Heart right ventricle (tissue), 16 donors: ENCODE measurements at regions of chr6 and their contacts with region 1.

Region 1: GRCh38 chr6:17431581-17431980 is 38.2 kb downstream of the CAP2 start:
- DNase-seq: no peak
- ATAC-seq: peak in 3 of 8 donors; percentile 52 to 79 (median 57)
- H3K4me3 ChIP-seq: no peak overlapping the region
- H3K27ac ChIP-seq: peak overlapping the region in 2 of 10 donors; percentile 14 to 49
- H3K4me1 ChIP-seq: peaks cover 0 to 24% (median 0%) of the 10 kb centered on the region in 9 donors
- H3K27me3 ChIP-seq: no peaks in the 10 kb centered on the region
- CTCF ChIP-seq: no peak

Region 2: DNA sequence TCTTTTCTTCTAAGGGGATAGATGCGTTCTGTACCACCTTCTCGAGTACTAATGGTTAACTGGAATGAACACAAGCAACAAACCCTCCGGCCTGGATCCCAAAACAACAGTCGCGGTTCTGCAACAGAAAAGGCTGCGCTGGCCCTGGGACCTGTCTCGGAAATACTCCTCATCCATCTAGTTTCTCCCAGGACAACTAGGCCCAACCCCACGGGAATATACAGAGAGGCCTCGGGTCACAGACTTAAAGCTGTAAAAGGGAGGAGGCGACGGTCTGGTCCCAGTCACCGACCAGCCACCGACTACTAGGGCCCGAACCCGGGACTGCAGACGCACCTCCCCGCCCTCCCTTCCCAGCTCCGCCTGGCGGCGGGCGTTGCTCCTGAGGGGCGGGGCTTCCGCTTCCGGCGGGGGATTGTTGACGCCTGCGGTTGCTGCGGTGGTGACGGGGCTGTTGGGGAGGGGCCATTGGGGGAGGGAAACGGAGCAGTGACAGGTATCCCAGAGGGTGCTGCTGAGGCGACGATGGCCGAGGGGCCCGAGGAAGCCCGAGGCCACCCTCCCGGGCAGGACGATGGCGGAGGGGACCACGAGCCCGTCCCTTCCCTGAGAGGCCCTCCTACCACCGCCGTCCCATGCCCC is 168.4 kb after region 1 on chr6 and contains the start of gene FAM8A1:
- intact Hi-C with region 1: no loop called
- DNase-seq: peak; percentile 96 to 97
- ATAC-seq: peak; percentile 98 to 99 (median 99)
- H3K4me3 ChIP-seq: peak within 1 kb of the TSS; percentile 51 to 99 (median 84)
- H3K27ac ChIP-seq: peak within 1 kb of the TSS; percentile 78 to 98 (median 94)
- H3K4me1 ChIP-seq: peaks cover 4 to 34% (median 11%) of the 10 kb centered on the region in 9 donors
- H3K27me3 ChIP-seq: no peaks in the 10 kb centered on the region
- CTCF ChIP-seq: peak; percentile 21 to 78 (median 55)
- total RNA-seq, gene FAM8A1: 14.5 to 23.2 (median 16.5) TPM

Region 3: GRCh38 chr6:17754254-17754653 is 322.7 kb after region 1 on chr6:
- intact Hi-C with region 1: loop called in 1 of 10 experiments (anchors 5 kb)
- DNase-seq: no peak
- ATAC-seq: no peak
- H3K4me3 ChIP-seq: no peak overlapping the region
- H3K27ac ChIP-seq: no peak overlapping the region
- H3K4me1 ChIP-seq: no peaks in the 10 kb centered on the region
- H3K27me3 ChIP-seq: no peaks in the 10 kb centered on the region
- CTCF ChIP-seq: no peak